Right ventricle myocardium superior (tissue), 1 donor: ENCODE measurements at regions of chr15 and their contacts with region 1.

Region 1: GRCh38 chr15:92917606-92918407 is 17.7 kb downstream of the CHD2 start:
- DNase-seq: peak; percentile 96
- ATAC-seq: peak; percentile 66

Region 2: GRCh38 chr15:92808978-92809879 is 108.6 kb before region 1 on chr15:
- intact Hi-C with region 1: loop called (anchors 2 kb)
- DNase-seq: peak; percentile 99
- ATAC-seq: peak; percentile 89